ENCODE measurements at regions of chr17 and their contacts with region 1.

Region 1: GRCh38 chr17:37701496-37701898 is 43.4 kb downstream of the HNF1B start:
- DNase-seq: no peak
- H3K4me3 ChIP-seq: no peak overlapping the region
- H3K27ac ChIP-seq: no peak overlapping the region
- H3K4me1 ChIP-seq: peaks cover 26% of the 10 kb centered on the region
- H3K27me3 ChIP-seq: no peaks in the 10 kb centered on the region
- CTCF ChIP-seq: peak; percentile 75

Region 2: DNA sequence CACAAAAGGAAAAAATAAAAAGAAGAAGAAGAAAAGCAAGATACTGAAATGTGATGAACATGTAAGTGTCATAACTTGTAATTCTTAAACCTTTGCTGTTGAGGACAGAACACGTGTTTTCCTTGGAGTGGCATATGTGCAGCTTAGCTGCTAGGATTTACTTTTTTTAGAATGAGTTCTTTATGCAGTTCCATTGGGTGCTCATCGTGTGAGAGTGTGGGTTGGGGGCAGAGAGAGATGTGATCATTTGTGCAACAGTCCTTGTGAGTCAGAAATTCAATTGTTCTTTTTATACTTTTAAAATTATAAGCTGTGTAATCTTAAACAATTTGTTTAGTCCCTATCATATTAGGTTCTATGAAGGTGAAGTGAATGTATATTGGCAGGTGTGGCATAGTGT is 1115.4 kb before region 1 on chr17:
- CTCF ChIA-PET with region 1: no interaction called
- POLR2A ChIA-PET with region 1: no interaction called
- intact Hi-C with region 1: no loop called
- DNase-seq: no peak
- H3K4me3 ChIP-seq: no peak overlapping the region
- H3K27ac ChIP-seq: no peak overlapping the region
- H3K4me1 ChIP-seq: no peaks in the 10 kb centered on the region
- H3K27me3 ChIP-seq: no peaks in the 10 kb centered on the region
- CTCF ChIP-seq: no peak

Region 3: GRCh38 chr17:37592291-37592690 is 109.2 kb before region 1 on chr17:
- CTCF ChIA-PET with region 1: no interaction called
- POLR2A ChIA-PET with region 1: interaction called, 10 read pairs
- intact Hi-C with region 1: no loop called
- DNase-seq: no peak
- H3K4me3 ChIP-seq: no peak overlapping the region
- H3K27ac ChIP-seq: no peak overlapping the region
- H3K4me1 ChIP-seq: no peaks in the 10 kb centered on the region
- H3K27me3 ChIP-seq: no peaks in the 10 kb centered on the region
- CTCF ChIP-seq: no peak

Region 4: GRCh38 chr17:37612364-37612763 is 89.1 kb before region 1 on chr17:
- CTCF ChIA-PET with region 1: interaction called, 12 read pairs
- POLR2A ChIA-PET with region 1: no interaction called
- intact Hi-C with region 1: no loop called
- DNase-seq: no peak
- H3K4me3 ChIP-seq: no peak overlapping the region
- H3K27ac ChIP-seq: no peak overlapping the region
- H3K4me1 ChIP-seq: peaks cover 12% of the 10 kb centered on the region
- H3K27me3 ChIP-seq: no peaks in the 10 kb centered on the region
- CTCF ChIP-seq: no peak

Region 5: DNA sequence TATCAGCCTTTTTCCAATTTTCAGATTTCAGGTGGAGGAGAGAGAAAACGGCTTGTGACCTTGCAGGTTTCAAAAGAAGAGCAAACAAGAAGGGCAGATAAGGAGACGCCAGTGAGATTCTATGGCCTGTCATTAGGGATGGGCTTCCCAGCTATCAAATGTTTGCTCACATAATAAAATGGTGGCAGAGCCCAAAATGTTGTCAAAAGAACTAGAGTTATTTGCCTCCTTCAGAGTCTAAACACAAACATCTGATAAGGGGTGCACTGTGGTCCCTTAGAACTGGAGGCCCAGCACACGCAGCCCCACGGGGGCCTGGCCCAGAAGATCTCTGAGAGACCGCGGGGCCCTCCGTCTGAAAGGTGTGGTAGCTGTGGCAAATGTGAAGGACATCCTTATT is 12.2 kb before region 1 on chr17:
- CTCF ChIA-PET with region 1: no interaction called
- POLR2A ChIA-PET with region 1: no interaction called
- intact Hi-C with region 1: no loop called
- DNase-seq: no peak
- H3K4me3 ChIP-seq: no peak overlapping the region
- H3K27ac ChIP-seq: no peak overlapping the region
- H3K4me1 ChIP-seq: no peaks in the 10 kb centered on the region
- H3K27me3 ChIP-seq: no peaks in the 10 kb centered on the region
- CTCF ChIP-seq: no peak

Region 6: GRCh38 chr17:37818689-37819088 is 117.2 kb after region 1 on chr17:
- CTCF ChIA-PET with region 1: interaction called, 6 read pairs
- POLR2A ChIA-PET with region 1: no interaction called
- intact Hi-C with region 1: loop called (anchors 2 kb)
- DNase-seq: peak; percentile 73 to 77
- H3K4me3 ChIP-seq: no peak overlapping the region
- H3K27ac ChIP-seq: no peak overlapping the region
- H3K4me1 ChIP-seq: no peaks in the 10 kb centered on the region
- H3K27me3 ChIP-seq: 0 out of 2 replicates have a peak, but pooled peaks cover 4% of the 10 kb centered on the region
- CTCF ChIP-seq: no peak

Region 7: GRCh38 chr17:38485146-38485468 is 783.6 kb after region 1 on chr17:
- CTCF ChIA-PET with region 1: no interaction called
- POLR2A ChIA-PET with region 1: no interaction called
- intact Hi-C with region 1: no loop called
- DNase-seq: no peak
- H3K4me3 ChIP-seq: no peak overlapping the region
- H3K27ac ChIP-seq: no peak overlapping the region
- H3K4me1 ChIP-seq: no peaks in the 10 kb centered on the region
- H3K27me3 ChIP-seq: no peaks in the 10 kb centered on the region
- CTCF ChIP-seq: no peak; the same call in 1 of the 2 replicates

Measured in PC-9 (cell line).